K562 (cell line): ENCODE measurements at regions of chr13 and their contacts with region 1.

Region 1: GRCh38 chr13:69324090-69324886 is 783.3 kb upstream of the ATXN8OS start:
- DNase-seq: no peak
- ATAC-seq: no peak
- H3K4me3 ChIP-seq: no peak overlapping the region
- H3K27ac ChIP-seq: no peak overlapping the region
- H3K4me1 ChIP-seq: no peaks in the 10 kb centered on the region
- H3K27me3 ChIP-seq: no peaks in the 10 kb centered on the region
- CTCF ChIP-seq: peak in 1 of 3 experiments; percentile 17; a peak in 2 of 6 replicates
- EP300 ChIP-seq: no peak
- POLR2A ChIP-seq: no peak
- RAD21 ChIP-seq: peak in 1 of 2 experiments; percentile 52; a peak in 2 of 4 replicates

Region 2: DNA sequence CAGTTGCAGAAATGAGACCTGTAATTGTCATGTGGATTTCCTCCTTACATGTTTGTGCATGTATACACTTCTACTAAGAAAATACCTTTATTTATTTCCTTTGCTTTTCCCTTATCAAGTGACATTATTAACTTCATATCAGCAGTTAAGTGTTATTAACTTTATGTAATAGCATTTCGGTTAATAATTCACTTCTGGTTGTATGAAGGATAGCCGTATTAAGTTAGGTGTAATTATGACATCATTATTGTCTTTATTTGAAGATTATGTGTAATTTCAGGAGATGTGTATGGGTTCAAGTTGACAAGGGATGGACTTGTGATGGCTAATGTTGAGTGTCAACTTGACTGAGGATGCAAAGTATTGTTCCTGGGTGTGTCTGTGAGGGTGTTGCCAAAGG is 97.8 kb before region 1 on chr13:
- CTCF ChIA-PET with region 1: no interaction called
- POLR2A ChIA-PET with region 1: no interaction called
- in situ Hi-C with region 1: no loop called
- intact Hi-C with region 1: loop called (anchors 10 kb)
- DNase-seq: no peak
- ATAC-seq: no peak
- H3K4me3 ChIP-seq: no peak overlapping the region
- H3K27ac ChIP-seq: no peak overlapping the region
- H3K4me1 ChIP-seq: no peaks in the 10 kb centered on the region
- H3K27me3 ChIP-seq: no peaks in the 10 kb centered on the region
- CTCF ChIP-seq: no peak
- EP300 ChIP-seq: no peak
- POLR2A ChIP-seq: no peak
- RAD21 ChIP-seq: no peak